HepG2 (cell line): ENCODE measurements at regions of chr10 and their contacts with region 1.

Region 1: GRCh38 chr10:112565434-112566053 is 118.5 kb downstream of the VTI1A start:
- DNase-seq: peak; percentile 79
- ATAC-seq: peak; percentile 41; the same call in 1 of the 3 replicates
- H3K4me3 ChIP-seq: no peak overlapping the region
- H3K27ac ChIP-seq: no peak overlapping the region
- H3K4me1 ChIP-seq: peaks cover 49% of the 10 kb centered on the region
- H3K27me3 ChIP-seq: no peaks in the 10 kb centered on the region
- CTCF ChIP-seq: peak; percentile 78
- EP300 ChIP-seq: peak in 1 of 2 experiments; percentile 18; a peak in 1 of 4 replicates
- POLR2A ChIP-seq: no peak
- RAD21 ChIP-seq: peak; percentile 70; the same call in 1 of the 2 replicates

Region 2: DNA sequence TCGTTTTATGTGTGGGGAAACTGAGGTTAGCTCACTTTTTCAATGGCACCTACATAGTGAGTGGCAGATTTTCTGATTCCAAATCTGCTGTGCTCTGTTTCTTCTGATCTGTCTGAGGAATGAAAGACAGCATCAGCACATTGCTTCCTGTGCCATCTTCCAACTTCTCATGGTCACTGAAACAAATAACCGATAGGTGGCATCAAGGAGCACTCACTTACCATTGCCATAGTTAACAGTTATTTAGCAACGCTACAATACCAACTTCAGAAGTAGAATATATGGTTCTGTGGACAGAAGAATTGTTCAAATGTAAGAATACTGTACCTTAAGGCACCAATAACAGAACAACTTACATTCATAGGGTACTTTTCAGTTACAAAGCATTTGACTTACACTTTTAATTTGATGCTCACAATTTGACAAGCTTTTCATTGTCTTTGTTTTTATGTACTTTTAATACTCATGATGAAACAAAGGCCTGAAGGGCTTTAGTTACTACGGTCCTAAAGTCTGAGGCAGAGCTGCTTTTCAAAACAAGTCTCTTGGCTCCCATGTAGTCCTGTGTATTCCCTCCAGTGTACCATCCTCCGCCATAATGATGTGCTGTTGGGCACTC is 155.6 kb after region 1 on chr10:
- CTCF ChIA-PET with region 1: no interaction called
- POLR2A ChIA-PET with region 1: no interaction called
- in situ Hi-C with region 1: no loop called
- intact Hi-C with region 1: loop called (anchors 10 kb)
- DNase-seq: peak; percentile 31
- ATAC-seq: no peak
- H3K4me3 ChIP-seq: no peak overlapping the region
- H3K27ac ChIP-seq: no peak overlapping the region
- H3K4me1 ChIP-seq: peaks cover 66% of the 10 kb centered on the region
- H3K27me3 ChIP-seq: no peaks in the 10 kb centered on the region
- CTCF ChIP-seq: peak; percentile 56
- EP300 ChIP-seq: no peak
- POLR2A ChIP-seq: no peak
- RAD21 ChIP-seq: 0 out of 2 replicates have a peak, but pooled peaks have one; percentile 26

Region 3: GRCh38 chr10:112741830-112742411 is 176.4 kb after region 1 on chr10:
- CTCF ChIA-PET with region 1: no interaction called
- POLR2A ChIA-PET with region 1: no interaction called
- in situ Hi-C with region 1: no loop called
- intact Hi-C with region 1: loop called (anchors 5 kb)
- DNase-seq: peak; percentile 76
- ATAC-seq: no peak
- H3K4me3 ChIP-seq: no peak overlapping the region
- H3K27ac ChIP-seq: peak overlapping the region; percentile 92
- H3K4me1 ChIP-seq: peaks cover 86% of the 10 kb centered on the region
- H3K27me3 ChIP-seq: no peaks in the 10 kb centered on the region
- CTCF ChIP-seq: no peak
- EP300 ChIP-seq: peak in 1 of 2 experiments; percentile 87; a peak in 2 of 4 replicates
- POLR2A ChIP-seq: no peak
- RAD21 ChIP-seq: no peak

Region 4: DNA sequence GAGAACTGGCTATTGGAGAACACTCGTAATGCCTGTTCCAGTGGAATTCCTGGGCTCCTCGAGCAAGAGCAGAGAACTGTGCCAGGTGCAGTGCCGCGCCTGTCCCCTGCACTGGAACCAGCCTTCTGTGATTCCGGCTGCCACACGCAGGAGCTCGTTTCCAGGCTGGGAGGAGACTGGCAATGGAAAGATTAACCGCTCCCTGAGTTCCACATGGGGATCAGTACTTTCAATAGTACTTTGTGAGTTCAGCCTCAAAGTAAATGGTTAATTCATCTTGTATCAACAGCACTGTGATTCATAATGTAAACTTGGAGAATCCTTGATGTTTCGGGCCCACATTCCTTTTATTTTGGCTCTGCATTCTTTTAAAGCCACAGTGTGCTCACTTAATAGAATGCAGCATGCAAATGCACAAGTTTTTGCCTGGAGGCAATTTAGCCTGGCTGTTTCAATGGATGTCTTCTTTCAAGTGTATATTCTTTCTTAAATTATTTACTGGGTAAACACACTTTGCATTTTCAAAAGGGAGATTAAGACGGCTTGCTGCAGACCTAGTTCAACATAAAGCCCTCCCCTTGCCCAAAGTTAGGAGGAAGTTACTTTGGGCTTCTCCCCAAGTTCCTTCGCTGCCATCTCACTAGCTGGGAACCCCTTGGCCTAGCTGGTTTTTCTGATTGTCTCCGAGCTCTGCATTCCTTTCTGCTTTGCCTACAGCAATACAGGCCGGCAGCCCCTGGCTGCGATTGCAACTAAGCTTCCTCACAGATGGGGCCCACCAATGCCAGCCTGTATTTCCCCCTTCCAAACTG is 246.4 kb after region 1 on chr10:
- CTCF ChIA-PET with region 1: no interaction called
- POLR2A ChIA-PET with region 1: no interaction called
- in situ Hi-C with region 1: no loop called
- intact Hi-C with region 1: loop called (anchors 10 kb)
- DNase-seq: peak; percentile 95
- ATAC-seq: peak; percentile 92
- H3K4me3 ChIP-seq: no peak overlapping the region
- H3K27ac ChIP-seq: no peak overlapping the region
- H3K4me1 ChIP-seq: peaks cover 54% of the 10 kb centered on the region
- H3K27me3 ChIP-seq: no peaks in the 10 kb centered on the region
- CTCF ChIP-seq: no peak
- EP300 ChIP-seq: peak in 1 of 2 experiments; percentile 91; a peak in 2 of 4 replicates
- POLR2A ChIP-seq: no peak
- RAD21 ChIP-seq: no peak; the same call in none of the 2 replicates

Region 5: DNA sequence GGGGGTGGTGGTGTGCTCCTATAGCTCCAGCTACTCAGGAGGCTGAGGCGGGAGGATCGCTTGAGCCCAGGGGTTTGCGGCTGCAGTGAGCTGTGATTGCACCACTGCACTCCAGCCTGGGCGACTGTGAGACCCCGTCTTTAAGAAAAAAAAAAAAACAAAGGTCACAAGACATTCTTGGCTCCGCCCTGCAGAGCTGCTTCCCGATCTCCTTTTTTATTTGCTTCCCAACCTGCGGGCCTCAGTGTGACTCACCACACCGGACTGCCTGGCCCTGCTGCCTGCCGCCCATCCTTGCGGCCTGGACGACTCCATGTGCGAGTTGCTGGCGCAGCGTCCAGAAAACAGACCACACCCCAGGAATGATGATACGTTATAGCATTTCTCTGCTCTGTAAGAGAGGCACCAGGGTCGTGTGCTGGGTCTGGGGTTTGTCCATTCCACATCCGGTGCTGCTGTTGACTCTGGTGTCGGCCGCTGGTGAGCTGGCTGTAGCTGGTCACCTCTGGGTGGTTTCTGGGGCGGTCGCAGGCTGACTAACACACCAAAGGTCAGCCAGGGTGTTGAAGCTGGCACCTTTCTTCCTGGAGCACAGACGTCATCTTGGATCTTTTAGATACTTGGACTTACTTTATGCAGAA is 508.1 kb after region 1 on chr10:
- CTCF ChIA-PET with region 1: no interaction called
- POLR2A ChIA-PET with region 1: no interaction called
- in situ Hi-C with region 1: no loop called
- intact Hi-C with region 1: loop called (anchors 10 kb)
- DNase-seq: peak; percentile 91
- ATAC-seq: peak; percentile 98
- H3K4me3 ChIP-seq: peak overlapping the region in 2 of 3 experiments; percentile 18 to 40; a peak in 2 of 6 replicates
- H3K27ac ChIP-seq: peak overlapping the region; percentile 46
- H3K4me1 ChIP-seq: peaks cover 32% of the 10 kb centered on the region
- H3K27me3 ChIP-seq: no peaks in the 10 kb centered on the region
- CTCF ChIP-seq: no peak
- EP300 ChIP-seq: peak in 1 of 2 experiments; percentile 64; a peak in 2 of 4 replicates
- POLR2A ChIP-seq: 0 out of 4 replicates have a peak, but pooled peaks of 1 of the 2 experiments have one; percentile 21
- RAD21 ChIP-seq: no peak

Region 6: DNA sequence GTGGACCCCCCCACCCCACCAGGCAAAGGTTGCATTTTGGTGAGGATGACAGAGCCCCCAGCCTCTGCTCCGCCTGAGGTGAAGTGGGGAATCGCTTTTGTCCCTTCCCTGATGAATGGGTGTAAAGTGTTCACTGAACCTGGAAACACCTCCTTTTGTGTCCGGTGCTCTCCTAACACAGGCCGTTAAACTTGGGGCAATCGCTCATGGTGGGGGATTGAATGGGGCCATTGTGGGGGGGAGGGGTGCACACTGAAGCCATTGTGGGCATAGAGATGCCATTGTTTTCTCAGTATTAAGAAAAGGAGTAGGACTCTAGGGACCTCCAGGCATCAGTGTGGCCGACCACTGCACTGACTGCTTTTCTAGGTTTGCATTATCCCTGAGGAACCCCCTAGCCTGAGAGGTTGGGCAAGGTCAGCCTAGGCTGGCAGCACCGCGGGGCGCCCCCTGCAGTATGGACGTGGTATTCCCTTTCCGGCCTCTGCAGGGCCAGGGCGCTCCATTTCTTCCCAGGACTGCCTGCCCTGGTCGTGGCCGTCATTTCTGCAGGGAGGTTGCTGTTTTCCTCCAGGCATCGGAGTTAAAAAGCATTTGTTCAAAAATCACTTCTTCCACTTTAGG is 542.8 kb after region 1 on chr10:
- CTCF ChIA-PET with region 1: no interaction called
- POLR2A ChIA-PET with region 1: no interaction called
- in situ Hi-C with region 1: loop called (anchors 25 kb)
- intact Hi-C with region 1: no loop called
- DNase-seq: no peak
- ATAC-seq: peak; percentile 81
- H3K4me3 ChIP-seq: no peak overlapping the region
- H3K27ac ChIP-seq: no peak overlapping the region
- H3K4me1 ChIP-seq: peaks cover 26% of the 10 kb centered on the region
- H3K27me3 ChIP-seq: no peaks in the 10 kb centered on the region
- CTCF ChIP-seq: peak; percentile 71
- EP300 ChIP-seq: no peak
- POLR2A ChIP-seq: no peak
- RAD21 ChIP-seq: peak; percentile 68

Region 7: DNA sequence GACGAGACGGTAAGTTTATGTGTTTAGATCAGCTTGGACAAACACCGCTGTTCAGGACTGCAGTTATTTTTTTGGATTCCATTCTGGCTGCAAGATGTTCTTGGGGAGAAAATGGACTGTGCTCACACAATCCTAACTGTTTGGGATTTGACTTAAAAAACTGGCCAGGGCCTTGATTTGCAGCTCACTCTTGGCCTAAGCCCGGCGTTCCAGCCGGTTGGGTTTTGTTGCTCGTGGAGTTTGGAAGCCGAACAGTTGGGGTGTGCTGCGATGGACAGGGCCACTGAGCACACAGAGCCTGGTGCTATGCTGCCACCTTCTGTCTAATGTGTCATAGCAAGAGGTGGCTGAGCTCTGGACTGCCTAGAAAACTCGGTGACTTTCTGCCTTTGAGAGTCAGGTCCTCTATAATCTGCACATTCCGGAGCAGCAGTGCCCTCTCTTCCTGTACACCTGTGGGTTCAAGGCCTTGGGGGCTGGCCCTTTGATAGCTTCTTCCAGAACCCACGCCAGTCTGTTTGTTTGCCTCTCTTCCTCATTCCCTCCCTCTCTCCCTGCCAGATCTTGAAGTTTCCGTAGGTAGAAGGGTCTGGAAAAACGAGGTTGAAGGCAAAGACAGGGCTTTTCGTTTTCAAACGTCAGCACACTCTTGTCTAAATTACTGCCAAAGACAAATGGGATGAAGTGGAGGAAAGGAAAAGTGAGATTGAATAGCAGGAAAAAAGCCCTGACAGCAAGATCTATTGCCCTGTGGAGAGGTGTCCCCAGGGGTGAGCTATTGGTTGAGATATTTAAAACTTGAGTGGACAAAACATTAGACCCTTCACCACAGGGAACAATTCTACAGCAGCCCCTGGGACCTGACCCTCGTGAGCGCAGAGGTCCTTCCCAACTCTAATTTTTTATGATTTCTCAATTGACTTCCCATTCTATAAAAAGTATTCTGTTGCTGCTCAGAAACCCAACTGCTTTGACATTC is 819.8 kb after region 1 on chr10:
- CTCF ChIA-PET with region 1: interaction called, 4 read pairs
- POLR2A ChIA-PET with region 1: no interaction called
- in situ Hi-C with region 1: loop called (anchors 10 kb)
- intact Hi-C with region 1: loop called (anchors 1 kb)
- DNase-seq: peak; percentile 71
- ATAC-seq: peak; percentile 100
- H3K4me3 ChIP-seq: peak overlapping the region in 1 of 3 experiments; percentile 15; a peak in 2 of 6 replicates
- H3K27ac ChIP-seq: no peak overlapping the region
- H3K4me1 ChIP-seq: peaks cover 13% of the 10 kb centered on the region
- H3K27me3 ChIP-seq: peaks cover under 1 to 63% of the 10 kb centered on the region in 2 experiments; a peak in 4 of 5 replicates
- CTCF ChIP-seq: peak; percentile 96
- EP300 ChIP-seq: no peak
- POLR2A ChIP-seq: no peak
- RAD21 ChIP-seq: peak; percentile 90